ENCODE measurements at regions of chr4 and their contacts with region 1.

Region 1: GRCh38 chr4:70687821-70688794 is at the start of gene UTP3:
- DNase-seq: peak; percentile 96 to 98 (median 98)
- H3K4me3 ChIP-seq: peak within 1 kb of the TSS; percentile 68 to 95 (median 93)
- H3K4me3 Mint-ChIP-seq: peak within 1 kb of the TSS; percentile 95 to 98
- H3K27ac ChIP-seq: peak within 1 kb of the TSS; percentile 93 to 95
- H3K27ac Mint-ChIP-seq: peak within 1 kb of the TSS; percentile 89 to 99 (median 98)
- H3K4me1 ChIP-seq: peaks cover 42 to 54% of the 10 kb centered on the region in 2 donors
- H3K4me1 Mint-ChIP-seq: peaks cover 38% of the 10 kb centered on the region
- H3K27me3 ChIP-seq: no peaks in the 10 kb centered on the region
- H3K27me3 Mint-ChIP-seq: peaks cover 0 to 3% (median 2%) of the 10 kb centered on the region in 3 donors
- CTCF ChIP-seq: peak; percentile 96
- polyA plus RNA-seq, gene UTP3: 3.0 to 10.8 (median 5.0) TPM

Region 2: DNA sequence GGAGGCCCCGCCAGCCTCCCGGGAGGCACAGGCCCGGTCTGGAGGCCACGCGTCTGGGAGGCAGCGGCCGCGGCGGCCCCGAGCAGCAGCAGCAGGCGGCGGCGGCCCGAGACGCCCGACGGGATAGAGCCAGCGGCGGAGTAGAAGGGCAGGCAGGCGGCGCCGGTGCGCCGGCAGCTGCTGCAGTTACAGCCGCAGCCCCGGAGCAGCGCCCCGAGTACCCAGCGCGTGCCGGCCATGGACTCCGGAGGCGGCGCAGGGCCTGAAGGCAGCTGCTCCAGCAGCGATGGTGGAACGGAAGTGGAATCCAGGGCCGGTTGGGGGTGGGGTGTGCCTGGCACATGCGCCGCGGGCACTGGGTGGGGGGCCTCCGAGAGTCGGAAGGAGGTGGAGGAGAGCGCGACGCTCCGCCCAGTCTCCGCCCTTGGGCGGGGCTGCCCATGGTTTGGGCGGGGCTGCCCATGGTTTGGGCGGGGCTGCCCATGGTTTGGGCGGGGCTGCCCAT is 151.5 kb after region 1 on chr4 and contains the start of gene GRSF1:
- intact Hi-C with region 1: loop called (anchors 2 to 10 kb)
- DNase-seq: peak; percentile 80 to 91 (median 91)
- H3K4me3 ChIP-seq: peak within 1 kb of the TSS; percentile 62 to 79 (median 72)
- H3K4me3 Mint-ChIP-seq: peak within 1 kb of the TSS; percentile 95 to 96
- H3K27ac ChIP-seq: peak within 1 kb of the TSS; percentile 79 to 90
- H3K27ac Mint-ChIP-seq: peak within 1 kb of the TSS; percentile 92 to 97 (median 95)
- H3K4me1 ChIP-seq: peaks cover 20 to 25% of the 10 kb centered on the region in 2 donors
- H3K4me1 Mint-ChIP-seq: peaks cover 24% of the 10 kb centered on the region
- H3K27me3 ChIP-seq: no peaks in the 10 kb centered on the region
- H3K27me3 Mint-ChIP-seq: peaks cover 0 to 3% (median under 1%) of the 10 kb centered on the region in 3 donors
- CTCF ChIP-seq: no peak
- polyA plus RNA-seq, gene GRSF1: 29.1 to 95.9 (median 93.6) TPM

Measured in CD14-positive monocyte (primary cell).